Pancreas (tissue), 10 donors: ENCODE measurements at regions of chr19 and their contacts with region 1.

Region 1: DNA sequence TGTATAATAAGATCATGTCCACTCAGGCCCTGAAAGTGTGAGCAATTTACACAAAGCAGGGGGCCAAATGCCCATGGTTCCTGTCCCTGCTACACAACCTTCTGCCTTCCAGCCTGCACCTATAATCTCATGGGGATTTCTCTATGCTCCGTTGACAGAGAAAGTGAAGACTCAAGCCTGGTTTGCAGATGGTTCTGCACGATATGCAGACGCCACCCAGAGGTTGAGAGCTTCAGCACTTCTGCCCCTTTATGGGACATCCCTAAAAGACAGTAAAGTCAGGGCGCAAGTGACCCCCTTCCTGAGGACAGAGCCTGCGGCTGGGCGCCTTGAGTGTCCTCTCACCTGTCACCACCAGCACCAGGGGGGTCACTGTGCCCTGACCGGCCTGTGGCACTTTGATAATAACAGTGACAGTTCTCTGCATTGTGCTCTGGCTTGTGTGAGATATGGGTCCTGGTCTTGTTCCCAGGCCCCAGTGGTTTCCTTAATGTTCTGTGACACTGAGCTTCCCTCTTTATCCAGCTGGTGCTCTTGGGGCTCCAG is 15.1 kb downstream of the LILRA5 start:
- DNase-seq: no peak
- ATAC-seq: peak in 1 of 4 donors; percentile 22
- H3K4me3 ChIP-seq: no peak overlapping the region
- H3K27ac ChIP-seq: no peak overlapping the region
- H3K4me1 ChIP-seq: no peaks in the 10 kb centered on the region
- H3K27me3 ChIP-seq: no peaks in the 10 kb centered on the region
- CTCF ChIP-seq: no peak

Region 2: GRCh38 chr19:54373781-54374631 is 76.2 kb after region 1 on chr19:
- intact Hi-C with region 1: no loop called
- DNase-seq: no peak
- ATAC-seq: peak in 3 of 4 donors; percentile 26 to 56 (median 35)
- H3K4me3 ChIP-seq: no peak overlapping the region
- H3K27ac ChIP-seq: peak overlapping the region in 1 of 4 donors; percentile 17
- H3K4me1 ChIP-seq: no peaks in the 10 kb centered on the region
- H3K27me3 ChIP-seq: peaks cover 0 to 5% (median 0%) of the 10 kb centered on the region in 4 donors
- CTCF ChIP-seq: no peak

Region 3: DNA sequence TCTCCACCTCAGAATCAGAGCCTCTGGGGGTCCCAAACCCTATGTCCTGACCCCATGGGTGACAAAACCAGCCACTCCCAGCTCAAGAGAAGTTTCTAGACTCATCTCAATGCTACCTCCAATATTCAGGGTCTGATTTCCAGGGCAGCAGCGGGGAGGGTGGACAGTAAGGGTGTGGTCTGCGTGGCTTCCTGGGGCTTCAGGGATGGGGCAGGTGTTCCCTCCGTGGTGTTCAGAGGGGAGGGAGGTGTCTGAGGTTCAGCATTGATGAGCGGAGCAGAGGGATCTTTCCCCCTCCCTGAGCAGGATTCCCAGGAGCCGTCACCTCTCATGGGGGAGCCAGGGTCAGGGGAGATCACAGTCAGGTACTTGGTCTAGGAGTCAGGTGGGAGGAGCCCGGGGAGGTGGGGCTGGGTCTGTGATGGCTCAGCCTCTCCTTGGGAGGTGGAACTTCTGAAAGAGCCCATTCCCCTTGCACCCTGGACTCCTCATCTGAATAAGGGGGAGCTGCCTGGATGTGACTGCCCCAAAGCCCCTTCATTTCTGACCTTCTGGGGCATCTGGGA is 278.7 kb after region 1 on chr19:
- intact Hi-C with region 1: loop called in 1 of 3 experiments (anchors 2 kb)
- DNase-seq: no peak
- ATAC-seq: no peak
- H3K4me3 ChIP-seq: no peak overlapping the region
- H3K27ac ChIP-seq: no peak overlapping the region
- H3K4me1 ChIP-seq: no peaks in the 10 kb centered on the region
- H3K27me3 ChIP-seq: no peaks in the 10 kb centered on the region
- CTCF ChIP-seq: no peak